GM13976 (cell line): ENCODE measurements at regions of chr22 and their contacts with region 1.

Region 1: GRCh38 chr22:46542011-46542985 is 4.9 kb upstream of the CELSR1 start:
- DNase-seq: peak; percentile 95
- CTCF ChIP-seq: peak; percentile 97

Region 2: GRCh38 chr22:46355371-46355995 is 186.8 kb before region 1 on chr22:
- in situ Hi-C with region 1: loop called (anchors 5 kb)
- DNase-seq: peak; percentile 85
- CTCF ChIP-seq: peak; percentile 60

Region 3: GRCh38 chr22:46774253-46774979 is 232.1 kb after region 1 on chr22:
- in situ Hi-C with region 1: no loop called
- DNase-seq: peak; percentile 63
- CTCF ChIP-seq: no peak